Heart left ventricle (tissue), 16 donors: ENCODE measurements at regions of chr6 and their contacts with region 1.

Region 1: DNA sequence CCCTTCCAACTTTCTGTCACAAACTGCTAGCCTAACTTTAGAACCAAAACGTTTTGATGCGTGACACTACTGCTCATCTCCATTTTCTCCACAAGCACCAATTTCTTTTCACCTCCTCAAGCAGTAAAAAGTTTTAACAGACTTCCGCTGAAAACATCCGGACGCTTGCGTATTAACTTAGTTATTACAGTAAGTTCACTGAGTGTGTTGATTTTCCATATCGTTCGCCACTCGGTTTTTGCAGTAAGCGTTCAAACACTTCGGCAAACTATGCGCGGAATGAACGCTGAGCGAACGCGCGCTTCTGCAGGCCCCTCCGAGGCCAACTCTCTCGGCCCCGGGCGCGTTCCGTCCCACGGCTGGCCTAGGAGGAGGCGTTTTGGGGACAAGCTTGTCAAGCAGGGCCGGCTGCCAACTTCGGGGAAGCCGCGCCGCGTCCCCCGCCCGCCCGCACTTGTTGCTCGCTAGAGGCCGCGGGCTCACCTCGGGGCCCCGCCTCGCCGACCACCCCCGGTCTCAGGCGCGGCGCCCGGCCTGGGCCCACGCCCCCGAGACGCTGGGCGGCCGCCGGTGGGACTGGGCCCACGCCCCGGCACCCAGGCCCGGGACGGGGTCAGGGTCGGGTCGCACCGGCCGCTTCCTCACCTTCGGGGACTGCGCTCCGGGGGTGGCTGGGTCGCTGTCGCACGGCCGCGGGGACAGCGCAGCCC is 945 bp downstream of the PHF10 start:
- DNase-seq: peak; percentile 86 to 91 (median 88)
- ATAC-seq: peak; percentile 76 to 83 (median 80)
- H3K4me3 ChIP-seq: peak overlapping the region; percentile 41 to 94 (median 66)
- H3K27ac ChIP-seq: peak overlapping the region; percentile 59 to 96 (median 90)
- H3K4me1 ChIP-seq: peaks cover 0 to 40% (median 20%) of the 10 kb centered on the region in 12 donors
- H3K27me3 ChIP-seq: no peaks in the 10 kb centered on the region
- CTCF ChIP-seq: no peak
- POLR2A ChIP-seq: peak in 1 of 2 donors; percentile 9

Region 2: GRCh38 chr6:169701954-169702839 is 21.2 kb before region 1 on chr6 and contains the starts of genes C6orf120 and WDR27:
- intact Hi-C with region 1: loop called in 3 of 10 experiments (anchors 2 kb)
- DNase-seq: peak; percentile 96 to 99 (median 97)
- ATAC-seq: peak; percentile 96 to 99 (median 98)
- H3K4me3 ChIP-seq: peak within 1 kb of the TSS; percentile 72 to 99 (median 88)
- H3K27ac ChIP-seq: peak within 1 kb of the TSS; percentile 81 to 97 (median 94)
- H3K4me1 ChIP-seq: peaks cover 0 to 56% (median 30%) of the 10 kb centered on the region in 12 donors
- H3K27me3 ChIP-seq: no peaks in the 10 kb centered on the region
- CTCF ChIP-seq: peak in 2 of 12 donors; percentile 7 to 27
- POLR2A ChIP-seq: peak; percentile 46 to 91
- total RNA-seq, gene C6orf120: 14.3 to 22.9 (median 18.8) TPM
- total RNA-seq, gene WDR27: 2.2 to 12.3 (median 6.6) TPM

Region 3: GRCh38 chr6:169751242-169752073 is 28.1 kb after region 1 on chr6 and contains the starts of genes DYNLT2 and ERMARD:
- intact Hi-C with region 1: loop called in 3 of 10 experiments (anchors 1 to 2 kb)
- DNase-seq: peak; percentile 92 to 96 (median 94)
- ATAC-seq: peak; percentile 97 to 100 (median 99)
- H3K4me3 ChIP-seq: peak within 1 kb of the TSS; percentile 66 to 98 (median 88)
- H3K27ac ChIP-seq: peak within 1 kb of the TSS; percentile 85 to 97 (median 96)
- H3K4me1 ChIP-seq: peaks cover 0 to 29% (median 17%) of the 10 kb centered on the region in 12 donors
- H3K27me3 ChIP-seq: no peaks in the 10 kb centered on the region
- CTCF ChIP-seq: peak in 10 of 12 donors; percentile 14 to 37 (median 24)
- POLR2A ChIP-seq: peak in 1 of 2 donors; percentile 81
- total RNA-seq, gene DYNLT2: 0.49 to 1.2 (median 0.62) TPM
- total RNA-seq, gene ERMARD: 6.4 to 15.5 (median 8.8) TPM

Region 4: GRCh38 chr6:169961772-169962561 is 238.6 kb after region 1 on chr6:
- intact Hi-C with region 1: no loop called
- DNase-seq: peak in 3 of 5 donors; percentile 41 to 59 (median 48)
- ATAC-seq: peak in 3 of 4 donors; percentile 77 to 91 (median 83)
- H3K4me3 ChIP-seq: peak overlapping the region; percentile 33 to 69 (median 58)
- H3K27ac ChIP-seq: peak overlapping the region in 10 of 12 donors; percentile 8 to 82 (median 68)
- H3K4me1 ChIP-seq: peaks cover 0 to 15% (median 2%) of the 10 kb centered on the region in 12 donors
- H3K27me3 ChIP-seq: peaks cover 0 to 14% (median 0%) of the 10 kb centered on the region in 9 donors
- CTCF ChIP-seq: peak; percentile 31 to 80 (median 68)
- POLR2A ChIP-seq: no peak

Region 5: DNA sequence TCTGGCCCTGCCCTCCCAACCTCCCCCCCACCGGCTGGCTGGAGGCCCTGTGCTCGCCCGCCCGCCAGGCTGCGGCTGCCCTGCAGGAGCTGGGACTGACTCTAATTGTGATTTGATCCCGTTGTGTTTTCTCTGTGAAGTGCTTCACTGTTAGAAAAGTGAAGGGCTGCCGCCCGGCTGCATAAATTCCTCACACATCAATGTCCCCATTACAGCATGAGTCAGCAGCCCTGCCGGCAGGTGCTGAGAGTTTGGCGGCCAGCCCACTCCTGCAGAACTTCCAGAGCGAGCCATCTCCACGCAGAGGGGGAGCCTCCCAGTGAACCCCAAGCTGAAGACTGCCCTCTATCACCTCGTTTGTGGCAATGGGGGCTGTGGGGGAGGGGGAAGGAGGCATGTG is 429.6 kb after region 1 on chr6:
- intact Hi-C with region 1: no loop called
- DNase-seq: peak in 3 of 5 donors; percentile 54 to 71 (median 62)
- ATAC-seq: peak in 2 of 4 donors; percentile 36 to 59
- H3K4me3 ChIP-seq: peak overlapping the region in 3 of 12 donors; percentile 20 to 41 (median 34)
- H3K27ac ChIP-seq: peak overlapping the region; percentile 73 to 93 (median 84)
- H3K4me1 ChIP-seq: peaks cover 0 to 36% (median 25%) of the 10 kb centered on the region in 12 donors
- H3K27me3 ChIP-seq: peaks cover 0 to 4% (median 0%) of the 10 kb centered on the region in 9 donors
- CTCF ChIP-seq: no peak
- POLR2A ChIP-seq: no peak

Region 6: GRCh38 chr6:170554013-170554795 is 830.8 kb after region 1 on chr6 and contains the start of gene TBP:
- intact Hi-C with region 1: loop called in 1 of 10 experiments (anchors 10 kb)
- DNase-seq: peak; percentile 97 to 99 (median 98)
- ATAC-seq: peak; percentile 97 to 98 (median 97)
- H3K4me3 ChIP-seq: peak within 1 kb of the TSS; percentile 66 to 98 (median 80)
- H3K27ac ChIP-seq: peak within 1 kb of the TSS; percentile 84 to 98 (median 94)
- H3K4me1 ChIP-seq: peaks cover 14 to 54% (median 47%) of the 10 kb centered on the region in 12 donors
- H3K27me3 ChIP-seq: no peaks in the 10 kb centered on the region
- CTCF ChIP-seq: peak in 1 of 12 donors; percentile 12
- POLR2A ChIP-seq: peak in 1 of 2 donors; percentile 41
- total RNA-seq, gene TBP: 6.5 to 19.1 (median 8.9) TPM